SK-N-SH (cell line): ENCODE measurements at regions of chr20 and their contacts with region 1.

Region 1: DNA sequence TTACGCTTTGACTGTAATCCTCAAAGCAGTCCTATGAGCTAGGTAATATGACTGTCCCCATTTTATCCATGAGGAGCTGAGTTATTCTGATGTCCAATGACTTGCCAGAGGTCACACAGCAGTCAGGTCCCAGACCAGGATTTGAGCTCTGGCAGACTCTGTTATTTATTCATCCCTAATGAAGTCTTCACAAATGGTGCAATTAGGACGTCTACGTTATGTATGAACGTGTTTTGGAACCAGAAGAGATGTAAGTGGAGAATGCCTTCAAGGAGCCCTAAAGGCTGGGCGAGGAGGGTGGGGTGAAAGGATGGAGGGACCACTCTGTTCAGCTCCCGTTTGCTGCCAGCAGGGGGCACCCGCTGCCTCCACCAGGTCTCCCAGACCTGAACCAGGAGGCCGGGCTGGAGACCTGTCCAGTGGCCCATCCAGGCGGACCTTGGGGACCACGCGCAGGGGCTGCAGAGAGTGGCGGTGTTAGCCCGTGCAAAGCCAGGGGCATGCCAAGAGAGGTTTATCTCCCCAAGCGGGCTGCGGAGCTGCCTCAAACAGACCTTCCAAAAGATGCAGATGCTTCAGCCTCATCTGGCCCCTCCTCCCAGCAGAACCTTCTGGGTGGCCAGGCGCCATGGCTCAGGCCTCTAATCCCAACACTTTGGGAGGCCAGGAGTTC is 15.2 kb upstream of the ZNF335 start:
- DNase-seq: peak; percentile 91
- H3K4me3 ChIP-seq: no peak overlapping the region; a peak in 1 of 4 replicates
- H3K27ac ChIP-seq: no peak overlapping the region
- H3K4me1 ChIP-seq: no peaks in the 10 kb centered on the region; a peak in 1 of 4 replicates
- H3K27me3 ChIP-seq: no peaks in the 10 kb centered on the region; the same call in 1 of the 2 replicates
- CTCF ChIP-seq: peak; percentile 90
- EP300 ChIP-seq: no peak
- RAD21 ChIP-seq: peak; percentile 79

Region 2: DNA sequence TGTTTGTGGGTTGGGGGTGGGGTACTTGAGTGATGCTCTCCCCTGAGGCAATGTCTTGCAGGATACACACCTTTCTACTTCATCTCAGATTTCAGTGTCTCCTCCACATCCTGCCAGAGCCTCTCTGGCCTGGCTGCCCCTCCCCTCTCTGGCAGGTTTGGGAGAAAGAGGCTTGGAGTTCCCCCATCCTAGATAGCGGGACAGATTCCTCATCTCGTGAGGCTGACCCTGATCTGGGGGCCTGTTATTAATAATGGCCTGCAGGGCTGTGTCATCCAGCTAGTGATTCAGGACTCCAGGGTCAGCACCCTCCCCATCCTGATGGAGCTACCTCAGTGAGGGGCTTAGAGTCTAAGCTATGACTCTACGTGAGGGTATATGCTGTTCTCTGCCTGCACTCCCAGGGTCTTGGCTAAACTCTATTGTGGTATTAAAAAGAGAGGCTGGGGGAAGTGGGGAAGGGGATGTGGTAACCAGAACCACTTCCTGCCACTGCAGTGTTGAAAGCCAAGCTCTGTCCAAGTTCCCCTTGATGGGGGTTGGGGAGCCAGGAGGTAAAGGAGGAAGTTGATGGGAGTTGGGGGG is 17.7 kb after region 1 on chr20:
- CTCF ChIA-PET with region 1: interaction called, 17 read pairs
- POLR2A ChIA-PET with region 1: no interaction called
- DNase-seq: no peak
- H3K4me3 ChIP-seq: no peak overlapping the region
- H3K27ac ChIP-seq: no peak overlapping the region
- H3K4me1 ChIP-seq: peaks cover 6 to 10% of the 10 kb centered on the region in 2 experiments; a peak in 2 of 4 replicates
- H3K27me3 ChIP-seq: no peaks in the 10 kb centered on the region
- CTCF ChIP-seq: no peak
- EP300 ChIP-seq: no peak
- RAD21 ChIP-seq: no peak

Region 3: GRCh38 chr20:46013826-46014516 is 26.7 kb after region 1 on chr20:
- CTCF ChIA-PET with region 1: interaction called, 28 read pairs
- POLR2A ChIA-PET with region 1: interaction called, 4 read pairs
- DNase-seq: peak; percentile 84
- H3K4me3 ChIP-seq: peak overlapping the region in 1 of 2 experiments; percentile 41; a peak in 2 of 4 replicates
- H3K27ac ChIP-seq: no peak overlapping the region
- H3K4me1 ChIP-seq: peaks cover 0 to 6% of the 10 kb centered on the region in 2 experiments; a peak in 1 of 4 replicates
- H3K27me3 ChIP-seq: no peaks in the 10 kb centered on the region
- CTCF ChIP-seq: peak; percentile 67
- EP300 ChIP-seq: no peak
- RAD21 ChIP-seq: peak; percentile 57

Region 4: DNA sequence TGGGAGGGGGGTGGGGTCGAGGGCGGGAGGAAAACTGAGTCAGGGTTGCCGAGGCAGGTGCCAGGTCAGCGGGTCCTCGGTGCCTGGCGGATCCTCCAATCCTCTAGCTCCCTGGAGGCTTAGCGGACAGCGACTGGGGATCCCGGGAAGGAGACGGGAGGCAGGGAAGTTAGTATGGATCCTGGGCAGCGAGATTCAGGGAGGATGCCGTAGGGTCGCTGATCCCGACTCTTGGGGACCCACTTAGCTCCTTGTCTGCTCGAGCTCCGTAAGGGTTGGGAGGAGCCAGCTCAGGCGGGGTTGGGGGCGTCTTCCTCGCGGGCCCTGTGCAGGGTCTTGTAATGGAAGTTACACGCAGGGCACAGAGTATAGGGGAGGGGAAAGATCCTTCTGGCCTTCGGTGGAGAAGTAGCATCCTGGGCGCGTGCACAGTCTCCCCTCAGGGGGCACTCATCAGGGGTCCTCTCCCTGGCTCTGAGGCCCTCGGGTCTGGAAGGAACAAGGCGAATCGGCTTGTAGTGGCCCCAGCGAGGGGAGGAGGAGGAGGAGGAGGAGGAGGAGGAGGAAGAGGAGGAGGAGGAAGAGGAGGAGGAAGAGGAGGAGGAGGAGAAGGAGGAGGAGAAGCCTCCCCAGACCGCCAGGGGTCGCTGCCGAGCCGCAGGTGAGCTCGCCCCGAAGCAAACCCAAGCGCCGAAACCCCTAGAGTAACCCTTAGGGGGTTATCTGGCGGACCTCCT is 35.3 kb after region 1 on chr20:
- CTCF ChIA-PET with region 1: interaction called, 12 read pairs
- POLR2A ChIA-PET with region 1: no interaction called
- DNase-seq: peak; percentile 59
- H3K4me3 ChIP-seq: peak overlapping the region; percentile 59 to 60
- H3K27ac ChIP-seq: no peak overlapping the region; a peak in 1 of 4 replicates
- H3K4me1 ChIP-seq: peaks cover 0 to 13% of the 10 kb centered on the region in 2 experiments; a peak in 1 of 4 replicates
- H3K27me3 ChIP-seq: no peaks in the 10 kb centered on the region
- CTCF ChIP-seq: peak; percentile 59
- EP300 ChIP-seq: no peak
- RAD21 ChIP-seq: peak; percentile 52

Region 5: DNA sequence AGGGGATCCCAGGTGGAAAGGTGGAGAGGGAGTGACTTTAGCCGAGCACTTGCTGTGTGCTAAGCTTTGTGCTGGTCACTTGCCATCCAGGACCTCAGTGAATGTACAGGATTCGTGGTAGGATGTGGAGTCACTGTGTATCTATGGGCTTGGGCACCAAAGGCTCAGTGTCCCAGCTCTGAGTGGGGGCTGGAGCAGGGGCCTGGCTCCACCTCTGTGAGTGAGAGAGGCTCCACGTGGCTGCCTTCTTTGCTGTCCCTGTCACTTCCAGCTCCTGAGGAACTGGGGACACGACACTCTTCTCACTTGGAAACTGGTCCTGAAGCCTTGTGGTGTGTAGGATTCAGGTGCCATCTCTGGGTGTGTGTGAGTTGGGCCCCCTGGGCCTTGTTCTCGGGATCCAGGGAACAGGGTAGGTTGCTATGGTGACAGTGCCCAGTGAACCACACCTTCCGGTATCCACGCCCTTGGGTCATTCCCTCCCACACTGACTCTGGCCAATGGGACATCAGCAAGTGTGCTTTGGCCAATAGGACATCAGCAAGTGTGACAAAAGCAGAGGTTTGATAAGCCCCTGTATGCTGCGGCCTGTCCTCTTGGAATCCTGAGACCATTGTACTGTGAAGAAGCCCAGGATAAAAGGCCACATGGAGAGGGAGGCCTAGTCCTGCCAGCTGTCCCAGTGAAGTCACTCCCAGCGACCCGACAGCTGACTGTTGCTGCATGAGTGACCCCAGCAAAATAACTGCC is 233.4 kb after region 1 on chr20:
- CTCF ChIA-PET with region 1: no interaction called
- POLR2A ChIA-PET with region 1: no interaction called
- DNase-seq: peak; percentile 89
- H3K4me3 ChIP-seq: no peak overlapping the region
- H3K27ac ChIP-seq: peak overlapping the region in 1 of 2 experiments; percentile 66; a peak in 2 of 4 replicates
- H3K4me1 ChIP-seq: peaks cover 0 to 29% of the 10 kb centered on the region in 2 experiments; a peak in 1 of 4 replicates
- H3K27me3 ChIP-seq: 0 out of 2 replicates have a peak, but pooled peaks cover 8% of the 10 kb centered on the region
- CTCF ChIP-seq: no peak
- EP300 ChIP-seq: no peak; a peak in 1 of 4 replicates
- RAD21 ChIP-seq: no peak